ENCODE measurements at regions of chr12 and their contacts with region 1.

Region 1: DNA sequence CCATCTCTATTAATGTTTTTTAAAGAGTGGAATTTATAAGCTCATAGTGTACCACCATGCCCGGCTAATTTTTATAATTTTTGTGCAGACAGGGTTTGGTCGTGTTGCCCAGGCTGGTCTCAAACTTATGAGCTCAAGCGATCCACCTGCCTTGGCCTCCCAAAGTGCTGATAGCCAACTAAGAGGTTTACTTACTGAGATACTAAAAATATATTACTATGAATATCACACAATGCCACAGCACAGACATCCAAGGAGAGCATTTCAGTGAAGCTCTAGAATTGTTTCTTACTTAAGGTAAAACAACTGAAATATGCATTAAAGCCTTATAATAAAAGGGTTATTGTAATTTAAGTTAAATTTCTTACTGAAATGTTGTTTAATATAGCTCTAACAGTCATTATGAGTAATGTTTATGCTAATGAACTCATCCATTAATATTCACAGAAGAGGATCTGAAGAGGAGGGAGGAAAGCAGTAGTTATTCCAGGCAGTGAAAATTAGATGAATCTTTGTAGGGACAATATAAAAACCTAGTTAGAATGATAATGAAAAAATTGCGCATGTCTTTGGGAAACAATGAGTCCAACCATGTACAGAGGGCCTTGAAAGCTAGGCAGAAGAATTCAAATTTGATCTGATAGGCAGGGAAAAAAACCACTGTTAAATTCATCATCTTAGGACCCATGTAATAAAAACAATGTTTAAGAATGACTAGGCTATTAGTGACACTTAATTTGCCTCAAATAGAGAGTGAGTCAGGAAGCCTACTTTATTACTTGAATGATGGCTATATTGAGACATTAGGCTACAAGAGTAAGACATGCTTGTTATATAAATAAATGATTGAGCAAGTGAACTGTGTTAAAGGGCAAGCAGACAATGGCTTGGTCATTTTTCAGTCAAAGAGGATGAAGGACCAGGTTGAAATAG is 99.2 kb downstream of the SLC41A2 start:
- DNase-seq: no peak

Region 2: GRCh38 chr12:104615048-104615561 is 243.8 kb before region 1 on chr12:
- intact Hi-C with region 1: no loop called
- DNase-seq: no peak

Region 3: GRCh38 chr12:104790296-104791125 is 68.4 kb before region 1 on chr12:
- intact Hi-C with region 1: loop called (anchors 10 kb)
- DNase-seq: peak; percentile 79

Region 4: GRCh38 chr12:104805186-104805585 is 53.7 kb before region 1 on chr12:
- intact Hi-C with region 1: no loop called
- DNase-seq: no peak

Region 5: DNA sequence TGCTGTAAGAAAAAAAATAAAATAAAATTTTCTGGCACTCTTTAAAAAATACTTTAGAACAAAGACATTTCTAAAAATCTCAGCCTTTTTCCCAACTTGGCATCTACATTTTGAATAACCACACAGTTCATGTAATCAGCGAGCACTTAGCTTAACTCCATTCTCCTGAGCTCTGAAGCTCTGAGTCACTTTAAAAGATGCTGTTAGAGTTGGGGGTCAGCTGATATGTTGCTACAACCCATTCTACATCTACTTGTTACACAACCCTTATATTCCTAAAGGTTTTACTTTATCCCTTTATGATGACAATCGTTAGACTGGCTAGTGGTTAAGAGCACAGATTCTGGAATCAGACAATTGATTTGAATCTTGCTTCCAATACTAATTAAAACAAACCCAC is 50.9 kb after region 1 on chr12:
- intact Hi-C with region 1: no loop called
- DNase-seq: no peak

Region 6: DNA sequence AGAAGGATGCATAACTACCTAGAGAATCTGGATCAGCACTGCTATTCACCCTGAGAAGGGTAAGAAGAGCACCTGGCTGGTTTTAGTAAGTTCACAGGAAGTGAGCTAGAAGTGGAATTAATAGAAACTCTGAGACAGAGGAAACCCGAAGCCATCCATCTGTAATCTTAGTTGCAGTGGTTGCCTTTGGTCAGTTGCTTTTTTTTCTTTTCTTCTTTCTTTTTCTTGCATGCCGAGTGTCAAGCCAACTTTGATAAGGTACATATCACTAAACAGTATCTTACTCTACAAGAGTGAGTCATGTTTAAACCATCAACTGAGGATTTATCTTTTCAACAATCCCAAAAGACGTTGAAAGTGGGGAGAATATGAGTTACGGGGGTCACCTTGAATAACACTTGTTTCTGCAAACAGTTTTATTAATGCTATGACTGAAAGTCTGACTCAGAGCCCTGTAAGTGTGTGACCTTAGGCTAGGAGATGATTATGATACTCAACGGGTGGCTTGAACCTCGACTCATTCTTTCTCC is 498.4 kb after region 1 on chr12:
- intact Hi-C with region 1: no loop called
- DNase-seq: no peak